ENCODE measurements at regions of chr18 and their contacts with region 1.

Region 1: GRCh38 chr18:12271376-12272235 is 17.4 kb downstream of the CIDEA start:
- DNase-seq: peak; percentile 74
- ATAC-seq: peak; percentile 99
- H3K4me3 ChIP-seq: peak overlapping the region; percentile 53
- H3K27ac ChIP-seq: peak overlapping the region; percentile 23; the same call in 1 of the 2 replicates
- H3K4me1 ChIP-seq: no peaks in the 10 kb centered on the region
- H3K27me3 ChIP-seq: peaks cover 6% of the 10 kb centered on the region
- CTCF ChIP-seq: peak; percentile 58
- POLR2A ChIP-seq: no peak; the same call in 1 of the 2 replicates
- RAD21 ChIP-seq: peak; percentile 47

Region 2: DNA sequence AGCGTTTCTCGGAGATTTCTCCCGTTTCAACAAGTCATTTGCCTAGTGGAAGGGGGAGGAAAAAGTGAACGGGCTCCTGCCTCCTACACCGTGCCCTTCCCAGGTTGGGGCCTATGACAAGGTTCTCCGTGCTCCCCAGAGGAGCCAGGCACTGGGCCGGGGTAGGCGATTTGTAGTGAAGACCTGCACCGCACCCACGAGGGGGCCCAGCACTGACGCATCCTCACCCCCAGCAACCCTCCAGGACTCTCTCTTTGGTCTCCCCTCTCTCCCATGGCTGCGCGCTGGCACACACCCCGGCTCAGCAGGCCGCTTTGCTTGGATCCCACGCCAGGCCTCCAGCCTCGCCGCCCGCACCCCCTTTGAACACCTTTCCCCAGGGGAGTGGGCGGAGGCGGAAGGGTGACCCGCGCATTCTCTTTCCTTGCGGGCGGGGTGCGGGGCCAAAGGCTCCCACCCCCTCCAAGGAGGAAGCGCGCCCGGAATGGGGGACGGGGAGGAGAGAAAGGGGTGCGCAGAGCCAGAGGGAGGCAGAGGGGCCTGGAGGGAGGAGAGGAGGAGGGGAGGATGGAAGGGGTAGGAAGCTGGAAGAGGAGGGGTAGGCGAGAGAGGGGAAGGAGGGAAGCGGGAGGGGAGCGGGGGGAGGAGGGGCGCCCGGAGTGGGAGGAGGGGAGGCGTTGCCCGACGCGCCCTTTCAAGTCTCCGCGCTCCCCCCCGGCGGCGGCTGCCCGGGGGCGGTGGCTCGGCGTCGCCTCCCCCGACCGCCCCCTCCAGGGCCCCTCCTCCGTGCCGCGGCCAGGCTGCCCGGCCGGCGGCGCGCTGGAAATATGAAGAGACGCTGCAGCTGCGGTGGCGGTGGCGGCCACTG is 1817.6 kb before region 1 on chr18 and contains the start of gene APCDD1:
- CTCF ChIA-PET with region 1: no interaction called
- POLR2A ChIA-PET with region 1: interaction called, 12 read pairs
- dilution Hi-C with region 1: no loop called
- in situ Hi-C with region 1: no loop called
- intact Hi-C with region 1: no loop called
- DNase-seq: no peak
- ATAC-seq: peak; percentile 79
- H3K4me3 ChIP-seq: peak within 1 kb of the TSS; percentile 48
- H3K27ac ChIP-seq: no peak within 1 kb of the TSS
- H3K4me1 ChIP-seq: no peaks in the 10 kb centered on the region; the same call in 1 of the 2 replicates
- H3K27me3 ChIP-seq: peaks cover 40% of the 10 kb centered on the region
- CTCF ChIP-seq: no peak
- POLR2A ChIP-seq: no peak
- RAD21 ChIP-seq: no peak
- total RNA-seq, gene APCDD1: 0.83 and 1.1 TPM in 2 replicates

Region 3: DNA sequence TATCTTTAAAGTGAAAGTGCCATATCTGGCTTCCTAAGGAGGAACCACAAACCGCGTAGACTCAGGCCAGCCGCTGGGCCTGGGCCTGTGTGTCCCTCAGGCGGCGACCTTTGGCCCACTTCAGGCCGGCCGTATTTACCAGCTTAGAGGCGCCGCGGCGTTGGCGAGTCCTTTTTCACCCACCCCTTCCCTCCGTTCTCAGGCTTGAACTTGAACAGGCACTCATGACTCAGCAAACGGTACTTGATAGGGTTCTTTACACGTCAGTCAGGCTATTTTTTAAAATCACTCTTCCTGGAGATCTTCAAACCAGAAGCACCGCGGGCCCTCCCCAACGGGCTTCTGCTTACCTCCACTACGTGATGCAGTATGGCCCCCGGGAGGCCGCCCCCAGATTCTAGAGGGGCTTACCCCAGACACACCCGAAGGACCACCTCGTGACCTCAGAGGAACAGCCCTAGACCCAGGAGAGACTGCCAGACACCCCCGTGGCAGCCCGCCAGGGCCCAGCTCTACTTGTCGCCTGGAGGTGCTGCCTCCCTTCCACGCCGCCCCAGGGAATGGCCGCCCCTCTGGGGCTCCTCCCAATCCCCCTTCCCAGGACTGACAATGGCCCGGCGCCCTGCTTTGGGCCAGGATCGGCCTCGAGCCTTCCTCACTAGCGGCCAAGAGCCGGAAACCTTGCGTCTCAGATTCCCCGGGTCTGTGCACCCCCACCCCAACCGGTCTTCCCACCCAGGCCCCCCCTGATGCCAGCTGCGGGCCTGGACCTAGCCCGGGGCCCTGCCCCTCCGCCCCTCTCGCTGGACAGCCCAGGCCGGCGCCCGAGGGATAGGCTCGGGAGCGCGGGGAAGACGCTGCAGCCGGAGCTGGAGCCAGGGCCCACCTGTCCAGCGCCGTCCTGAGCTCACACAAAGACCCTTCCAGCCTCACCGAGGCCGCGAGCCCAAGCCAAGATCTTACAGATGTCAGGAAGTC is 324.1 kb before region 1 on chr18:
- CTCF ChIA-PET with region 1: no interaction called
- POLR2A ChIA-PET with region 1: no interaction called
- dilution Hi-C with region 1: no loop called
- in situ Hi-C with region 1: no loop called
- intact Hi-C with region 1: loop called (anchors 10 kb)
- DNase-seq: peak; percentile 97
- ATAC-seq: peak; percentile 88
- H3K4me3 ChIP-seq: no peak overlapping the region
- H3K27ac ChIP-seq: peak overlapping the region; percentile 88
- H3K4me1 ChIP-seq: peaks cover 24% of the 10 kb centered on the region
- H3K27me3 ChIP-seq: no peaks in the 10 kb centered on the region
- CTCF ChIP-seq: no peak
- POLR2A ChIP-seq: no peak
- RAD21 ChIP-seq: no peak

Measured in IMR-90 (cell line).